Activated CD8-positive, alpha-beta T cell treated with anti-CD3 and anti-CD28 coated beads, Interleukin-2, amount 10 ng/mL, durations not matched to agents 7 days and 5 days (primary cell): ENCODE measurements at regions of chr19 and their contacts with region 1.

Region 1: DNA sequence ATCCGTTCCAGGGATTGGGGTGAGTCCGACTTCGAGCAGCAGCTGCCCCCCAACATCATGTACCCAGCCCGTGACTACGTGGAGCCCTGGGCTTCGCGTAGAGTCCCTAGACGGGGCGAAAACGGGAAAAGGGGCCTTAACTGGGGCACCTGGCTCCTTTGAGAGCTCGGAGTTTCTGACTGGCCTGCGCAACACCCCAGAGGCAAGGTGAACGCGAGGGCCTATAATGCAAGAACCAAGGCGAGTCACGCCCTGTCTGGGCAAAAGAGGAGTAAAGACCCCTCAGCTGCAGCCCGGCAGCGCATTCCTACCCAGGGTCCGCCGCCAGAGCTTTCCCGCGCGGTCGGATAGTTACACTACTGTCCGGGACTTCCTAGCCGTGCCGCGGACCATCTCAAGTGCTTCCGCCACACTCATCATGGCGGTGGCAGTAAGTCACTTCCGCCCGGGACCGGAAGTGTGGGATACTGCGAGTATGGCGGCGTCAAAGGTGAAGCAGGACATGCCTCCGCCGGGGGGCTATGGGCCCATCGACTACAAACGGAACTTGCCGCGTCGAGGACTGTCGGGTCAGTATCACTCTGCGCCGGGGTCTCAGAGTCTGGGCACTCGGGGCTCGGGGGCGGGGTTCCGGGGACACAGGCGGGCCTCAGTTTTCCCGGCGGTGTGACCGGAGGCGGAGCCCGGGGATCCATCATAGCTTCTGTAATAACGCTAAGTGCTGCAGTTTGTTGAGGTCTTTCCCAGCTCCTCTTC is at the start of gene NDUFA13:
- DNase-seq: peak; percentile 95
- ATAC-seq: peak; percentile 91
- H3K4me3 Mint-ChIP-seq: peak within 1 kb of the TSS; percentile 94
- H3K27ac Mint-ChIP-seq: peak within 1 kb of the TSS; percentile 94
- H3K4me1 Mint-ChIP-seq: peaks cover 37% of the 10 kb centered on the region
- H3K27me3 Mint-ChIP-seq: no peaks in the 10 kb centered on the region
- total RNA-seq, gene NDUFA13: 388 to 413 TPM

Region 2: GRCh38 chr19:19459707-19460251 is 56.2 kb before region 1 on chr19:
- CTCF ChIA-PET with region 1: no interaction called
- POLR2A ChIA-PET with region 1: interaction called, 11 read pairs
- DNase-seq: peak; percentile 82
- ATAC-seq: peak; percentile 61
- H3K4me3 Mint-ChIP-seq: peak overlapping the region; percentile 64
- H3K27ac Mint-ChIP-seq: peak overlapping the region; percentile 99
- H3K4me1 Mint-ChIP-seq: peaks cover 87% of the 10 kb centered on the region
- H3K27me3 Mint-ChIP-seq: no peaks in the 10 kb centered on the region

Region 3: DNA sequence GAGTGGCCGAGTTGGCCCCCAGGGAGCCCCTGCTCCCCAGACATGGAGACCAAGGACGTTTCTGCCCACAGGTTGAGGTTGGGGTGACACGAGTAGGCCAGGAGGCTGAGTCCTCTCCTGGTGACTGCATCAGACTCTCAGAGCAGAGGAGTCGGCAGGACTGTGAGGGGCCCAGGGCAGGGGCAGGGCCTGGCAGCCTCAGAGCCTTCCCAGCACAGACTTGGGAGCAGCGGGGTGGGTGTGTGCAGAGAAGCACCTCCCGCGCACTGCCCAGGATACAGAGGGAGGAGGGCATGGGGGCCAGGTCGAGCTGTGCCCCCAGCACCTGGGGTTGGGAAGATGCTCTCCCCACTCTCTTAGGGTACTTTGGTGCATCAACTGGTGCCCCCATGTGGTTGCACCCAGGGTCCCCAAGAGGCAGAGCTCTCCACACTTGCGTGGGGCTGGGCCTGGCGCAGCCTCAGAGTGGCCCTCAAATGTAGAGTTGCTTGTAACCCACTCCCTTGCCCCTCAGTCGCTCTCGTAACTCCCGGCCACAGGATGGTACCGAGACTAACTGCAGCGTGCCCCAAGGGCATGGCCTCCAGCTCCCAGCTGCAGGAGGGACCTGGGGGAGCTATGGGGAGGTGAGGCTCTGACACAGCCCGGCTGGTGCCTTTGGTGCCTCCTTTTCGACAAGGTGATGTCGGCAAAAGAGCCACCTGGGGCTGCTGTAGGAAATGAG is 16.5 kb before region 1 on chr19:
- CTCF ChIA-PET with region 1: no interaction called
- POLR2A ChIA-PET with region 1: no interaction called
- DNase-seq: no peak
- ATAC-seq: no peak
- H3K4me3 Mint-ChIP-seq: no peak overlapping the region
- H3K27ac Mint-ChIP-seq: no peak overlapping the region
- H3K4me1 Mint-ChIP-seq: peaks cover 7% of the 10 kb centered on the region
- H3K27me3 Mint-ChIP-seq: no peaks in the 10 kb centered on the region

Region 4: GRCh38 chr19:19542319-19542906 is 26.5 kb after region 1 on chr19:
- CTCF ChIA-PET with region 1: no interaction called
- POLR2A ChIA-PET with region 1: no interaction called
- DNase-seq: no peak
- ATAC-seq: no peak
- H3K4me3 Mint-ChIP-seq: no peak overlapping the region
- H3K27ac Mint-ChIP-seq: no peak overlapping the region
- H3K4me1 Mint-ChIP-seq: peaks cover 28% of the 10 kb centered on the region
- H3K27me3 Mint-ChIP-seq: peaks cover 11% of the 10 kb centered on the region

Region 5: DNA sequence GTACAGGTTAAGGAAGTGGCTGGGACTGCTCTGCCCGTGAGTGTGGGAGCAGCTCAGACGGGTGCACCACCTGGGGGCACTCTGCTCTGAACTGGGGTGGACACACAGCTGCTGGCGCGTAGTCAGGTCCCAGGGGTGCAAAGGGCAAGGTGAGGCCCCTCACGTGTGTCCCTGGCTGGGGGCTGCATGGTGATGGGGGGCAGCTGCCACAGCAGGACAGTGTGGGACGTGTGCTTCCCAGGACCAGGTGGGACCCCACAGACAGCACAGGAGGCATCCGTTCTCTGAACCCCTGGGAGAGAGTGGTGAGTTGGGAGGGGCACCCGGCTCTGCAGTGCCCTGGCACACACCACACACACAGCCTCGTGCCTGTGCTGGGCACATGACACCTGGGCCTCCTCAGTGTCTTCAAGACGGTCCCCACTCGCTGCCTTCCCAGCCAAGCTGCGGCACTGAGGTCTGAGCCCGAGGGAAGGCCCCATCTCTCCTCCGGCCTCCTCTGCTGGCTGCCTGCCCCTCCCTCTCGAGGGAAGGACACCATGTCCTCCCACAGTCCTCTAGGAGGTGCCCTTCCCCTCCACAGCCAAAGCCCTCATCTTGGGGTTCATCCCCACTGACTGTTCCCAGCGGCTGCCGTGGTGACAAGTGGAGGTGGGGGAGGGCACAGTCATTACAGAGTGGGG is 46.9 kb after region 1 on chr19:
- CTCF ChIA-PET with region 1: no interaction called
- POLR2A ChIA-PET with region 1: no interaction called
- DNase-seq: peak; percentile 42
- ATAC-seq: peak; percentile 51
- H3K4me3 Mint-ChIP-seq: no peak overlapping the region
- H3K27ac Mint-ChIP-seq: peak overlapping the region; percentile 43
- H3K4me1 Mint-ChIP-seq: peaks cover 22% of the 10 kb centered on the region
- H3K27me3 Mint-ChIP-seq: no peaks in the 10 kb centered on the region